Activated T-helper 2 cell treated with anti-CD3 and anti-CD28 coated beads, Interferon-gamma antibody, Interleukin-2, Interleukin-4, amounts not matched to agents 10 μg/mL and 5 μg/mL and 100 μg/mL, durations not matched to agents 14 hours and 24 hours and 36 hours (primary cell): ENCODE measurements at regions of chr16 and their contacts with region 1.

Region 1: GRCh38 chr16:67660564-67661028 is at the start of gene PARD6A:
- DNase-seq: peak; percentile 95
- H3K4me3 Mint-ChIP-seq: peak within 1 kb of the TSS; percentile 92
- H3K27ac Mint-ChIP-seq: peak within 1 kb of the TSS; percentile 96
- H3K4me1 Mint-ChIP-seq: peaks cover 15% of the 10 kb centered on the region
- H3K27me3 Mint-ChIP-seq: no peaks in the 10 kb centered on the region
- total RNA-seq, gene PARD6A: 10.7 and 11.5 TPM in 2 replicates

Region 2: GRCh38 chr16:67537270-67537635 is 123.3 kb before region 1 on chr16:
- intact Hi-C with region 1: loop called (anchors 5 kb)
- DNase-seq: no peak
- H3K4me3 Mint-ChIP-seq: peak overlapping the region; percentile 77
- H3K27ac Mint-ChIP-seq: no peak overlapping the region
- H3K4me1 Mint-ChIP-seq: peaks cover 15% of the 10 kb centered on the region
- H3K27me3 Mint-ChIP-seq: peaks cover 32% of the 10 kb centered on the region

Region 3: GRCh38 chr16:67561824-67562525 is 98.6 kb before region 1 on chr16:
- intact Hi-C with region 1: loop called (anchors 1 kb)
- DNase-seq: peak; percentile 99
- H3K4me3 Mint-ChIP-seq: peak overlapping the region; percentile 83
- H3K27ac Mint-ChIP-seq: peak overlapping the region; percentile 90
- H3K4me1 Mint-ChIP-seq: peaks cover 32% of the 10 kb centered on the region
- H3K27me3 Mint-ChIP-seq: no peaks in the 10 kb centered on the region

Region 4: GRCh38 chr16:67641779-67642708 is 18.6 kb before region 1 on chr16:
- intact Hi-C with region 1: loop called (anchors 2 kb)
- DNase-seq: no peak
- H3K4me3 Mint-ChIP-seq: no peak overlapping the region
- H3K27ac Mint-ChIP-seq: no peak overlapping the region
- H3K4me1 Mint-ChIP-seq: peaks cover 6% of the 10 kb centered on the region
- H3K27me3 Mint-ChIP-seq: no peaks in the 10 kb centered on the region

Region 5: GRCh38 chr16:67719048-67719777 is 58.6 kb after region 1 on chr16 and contains the start of gene GFOD2:
- intact Hi-C with region 1: loop called (anchors 1 kb)
- DNase-seq: peak; percentile 96
- H3K4me3 Mint-ChIP-seq: peak within 1 kb of the TSS; percentile 88
- H3K27ac Mint-ChIP-seq: peak within 1 kb of the TSS; percentile 92
- H3K4me1 Mint-ChIP-seq: peaks cover 26% of the 10 kb centered on the region
- H3K27me3 Mint-ChIP-seq: no peaks in the 10 kb centered on the region
- total RNA-seq, gene GFOD2: 17.0 and 18.3 TPM in 2 replicates

Region 6: GRCh38 chr16:67841764-67842508 is 181.3 kb after region 1 on chr16 and contains the start of gene THAP11:
- intact Hi-C with region 1: loop called (anchors 2 kb)
- DNase-seq: peak; percentile 92
- H3K4me3 Mint-ChIP-seq: peak within 1 kb of the TSS; percentile 89
- H3K27ac Mint-ChIP-seq: peak within 1 kb of the TSS; percentile 94
- H3K4me1 Mint-ChIP-seq: peaks cover 29% of the 10 kb centered on the region
- H3K27me3 Mint-ChIP-seq: no peaks in the 10 kb centered on the region
- total RNA-seq, gene THAP11: 43.0 and 45.1 TPM in 2 replicates

Region 7: DNA sequence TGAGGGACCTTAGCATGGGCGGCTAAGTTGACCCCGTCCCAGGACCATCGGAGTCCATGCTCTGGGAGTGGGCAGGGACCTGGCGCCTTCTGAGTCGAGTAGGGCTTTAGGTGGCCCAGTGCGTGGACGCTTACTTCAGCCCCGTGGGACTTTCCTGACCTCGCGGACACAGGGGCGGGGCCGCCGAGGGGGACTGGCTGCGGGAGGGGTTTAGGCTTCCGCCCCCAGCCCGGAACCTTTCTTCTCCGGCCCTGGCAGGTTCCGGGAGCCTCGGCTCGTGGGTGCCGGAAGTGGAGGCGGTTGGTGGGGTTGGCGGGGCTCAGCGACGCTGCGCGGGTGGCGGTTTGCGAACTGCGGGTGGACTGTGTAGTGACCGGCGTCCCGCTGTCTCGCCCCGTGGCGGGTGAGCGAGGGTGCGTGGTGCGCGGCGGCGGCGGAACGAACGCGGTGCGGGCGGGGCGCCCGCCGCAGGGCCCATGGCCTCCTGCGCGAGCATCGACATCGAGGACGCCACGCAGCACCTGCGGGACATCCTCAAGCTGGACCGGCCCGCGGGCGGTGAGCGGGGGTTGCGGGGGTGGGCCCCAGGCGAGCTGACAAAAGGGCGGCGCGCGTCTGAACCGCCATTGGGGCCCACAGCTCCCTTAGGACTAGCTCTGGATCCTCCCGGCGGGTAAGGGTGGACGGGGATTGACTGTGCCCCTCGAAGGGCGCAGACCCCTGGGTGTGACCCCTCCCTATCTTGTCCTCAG is 212.4 kb after region 1 on chr16 and contains the start of gene EDC4:
- intact Hi-C with region 1: no loop called
- DNase-seq: peak; percentile 85
- H3K4me3 Mint-ChIP-seq: peak within 1 kb of the TSS; percentile 83
- H3K27ac Mint-ChIP-seq: peak within 1 kb of the TSS; percentile 89
- H3K4me1 Mint-ChIP-seq: peaks cover 21% of the 10 kb centered on the region
- H3K27me3 Mint-ChIP-seq: no peaks in the 10 kb centered on the region
- total RNA-seq, gene EDC4: 102 and 105 TPM in 2 replicates